Activated CD4-positive, alpha-beta T cell treated with anti-CD3 and anti-CD28 coated beads for 36 hours (primary cell): ENCODE measurements at regions of chr5 and their contacts with region 1.

Region 1: GRCh38 chr5:2751592-2752021 is at the start of gene IRX2:
- DNase-seq: no peak
- ATAC-seq: no peak
- H3K4me3 Mint-ChIP-seq: no peak within 1 kb of the TSS
- H3K27ac Mint-ChIP-seq: no peak within 1 kb of the TSS
- H3K4me1 Mint-ChIP-seq: peaks cover 20% of the 10 kb centered on the region
- H3K27me3 Mint-ChIP-seq: peaks cover 52% of the 10 kb centered on the region
- total RNA-seq, gene IRX2: not detected

Region 2: DNA sequence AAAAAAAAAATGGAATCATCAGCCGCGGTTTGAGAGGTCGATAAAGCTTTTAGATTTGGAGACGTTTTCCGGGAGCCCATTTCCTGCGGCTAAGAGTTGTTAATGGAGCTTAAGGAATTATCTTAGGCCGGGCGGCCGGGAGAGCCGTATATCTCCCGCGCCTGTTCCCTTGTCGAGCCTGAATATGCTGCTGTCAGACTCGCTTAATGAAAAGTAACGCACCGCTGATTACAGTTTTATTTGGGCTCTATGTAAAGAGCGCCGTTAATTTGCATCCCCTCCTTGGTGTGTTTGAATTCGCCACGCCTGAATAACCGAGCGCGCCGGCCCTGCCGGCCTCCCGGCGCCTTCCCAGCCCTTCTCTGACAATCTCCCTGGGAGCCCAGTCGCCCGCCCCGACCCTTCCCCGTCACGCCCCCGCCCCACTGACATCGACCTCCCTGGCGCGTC is 876.8 kb before region 1 on chr5:
- CTCF ChIA-PET with region 1: no interaction called
- POLR2A ChIA-PET with region 1: no interaction called
- intact Hi-C with region 1: loop called (anchors 2 to 5 kb)
- DNase-seq: no peak
- ATAC-seq: no peak
- H3K4me3 Mint-ChIP-seq: no peak overlapping the region
- H3K27ac Mint-ChIP-seq: no peak overlapping the region
- H3K4me1 Mint-ChIP-seq: peaks cover 8% of the 10 kb centered on the region
- H3K27me3 Mint-ChIP-seq: peaks cover 35% of the 10 kb centered on the region

Region 3: DNA sequence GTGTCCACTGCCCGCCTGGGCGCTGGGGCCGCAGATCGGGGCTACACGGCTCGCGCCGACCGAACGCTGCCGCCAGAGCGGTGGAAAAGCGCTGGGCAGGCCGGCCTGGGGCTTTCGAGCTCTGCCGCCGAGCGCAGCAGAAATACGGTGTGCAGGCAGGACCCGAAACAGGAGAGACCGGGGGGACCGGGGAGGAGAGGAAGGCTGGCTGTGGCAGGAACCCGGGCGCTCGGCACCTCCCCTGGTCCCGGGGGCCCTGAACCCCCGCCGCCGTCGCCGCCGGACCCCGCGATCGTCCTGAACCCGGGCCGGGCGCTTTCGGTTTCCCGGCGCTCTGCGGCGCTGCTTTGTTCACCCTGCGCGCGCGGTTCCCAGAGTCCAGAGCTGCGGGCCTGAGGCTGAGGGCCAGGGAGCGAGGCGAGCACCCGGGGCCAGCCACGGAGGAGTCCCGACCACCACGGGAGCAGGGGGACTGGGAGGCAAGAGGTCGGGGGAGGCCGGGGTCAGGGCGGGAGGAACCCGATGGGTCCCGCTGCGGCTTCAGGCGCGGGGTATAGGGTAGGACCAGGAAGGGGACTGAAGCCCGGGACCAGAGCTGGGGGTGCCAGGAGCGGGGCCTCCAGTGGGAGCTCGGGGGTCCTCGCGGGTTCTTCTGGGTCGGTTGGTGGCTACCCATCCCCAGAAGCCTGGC is 12.1 kb before region 1 on chr5:
- CTCF ChIA-PET with region 1: no interaction called
- POLR2A ChIA-PET with region 1: no interaction called
- intact Hi-C with region 1: loop called (anchors 2 kb)
- DNase-seq: no peak
- ATAC-seq: no peak
- H3K4me3 Mint-ChIP-seq: no peak overlapping the region
- H3K27ac Mint-ChIP-seq: no peak overlapping the region
- H3K4me1 Mint-ChIP-seq: no peaks in the 10 kb centered on the region
- H3K27me3 Mint-ChIP-seq: peaks cover 53% of the 10 kb centered on the region

Region 4: GRCh38 chr5:3118340-3118739 is 366.7 kb after region 1 on chr5:
- CTCF ChIA-PET with region 1: no interaction called
- POLR2A ChIA-PET with region 1: no interaction called
- intact Hi-C with region 1: loop called in 1 of 2 experiments (anchors 10 kb)
- DNase-seq: no peak
- ATAC-seq: no peak
- H3K4me3 Mint-ChIP-seq: no peak overlapping the region
- H3K27ac Mint-ChIP-seq: no peak overlapping the region
- H3K4me1 Mint-ChIP-seq: peaks cover 1% of the 10 kb centered on the region
- H3K27me3 Mint-ChIP-seq: peaks cover 61% of the 10 kb centered on the region

Region 5: GRCh38 chr5:3595006-3595961 is 843.7 kb after region 1 on chr5 and contains the start of gene IRX1:
- CTCF ChIA-PET with region 1: no interaction called
- POLR2A ChIA-PET with region 1: no interaction called
- intact Hi-C with region 1: loop called (anchors 2 to 5 kb)
- DNase-seq: no peak
- ATAC-seq: no peak
- H3K4me3 Mint-ChIP-seq: no peak within 1 kb of the TSS
- H3K27ac Mint-ChIP-seq: no peak within 1 kb of the TSS
- H3K4me1 Mint-ChIP-seq: peaks cover 10% of the 10 kb centered on the region
- H3K27me3 Mint-ChIP-seq: peaks cover 61% of the 10 kb centered on the region
- total RNA-seq, gene IRX1: not detected

Region 6: DNA sequence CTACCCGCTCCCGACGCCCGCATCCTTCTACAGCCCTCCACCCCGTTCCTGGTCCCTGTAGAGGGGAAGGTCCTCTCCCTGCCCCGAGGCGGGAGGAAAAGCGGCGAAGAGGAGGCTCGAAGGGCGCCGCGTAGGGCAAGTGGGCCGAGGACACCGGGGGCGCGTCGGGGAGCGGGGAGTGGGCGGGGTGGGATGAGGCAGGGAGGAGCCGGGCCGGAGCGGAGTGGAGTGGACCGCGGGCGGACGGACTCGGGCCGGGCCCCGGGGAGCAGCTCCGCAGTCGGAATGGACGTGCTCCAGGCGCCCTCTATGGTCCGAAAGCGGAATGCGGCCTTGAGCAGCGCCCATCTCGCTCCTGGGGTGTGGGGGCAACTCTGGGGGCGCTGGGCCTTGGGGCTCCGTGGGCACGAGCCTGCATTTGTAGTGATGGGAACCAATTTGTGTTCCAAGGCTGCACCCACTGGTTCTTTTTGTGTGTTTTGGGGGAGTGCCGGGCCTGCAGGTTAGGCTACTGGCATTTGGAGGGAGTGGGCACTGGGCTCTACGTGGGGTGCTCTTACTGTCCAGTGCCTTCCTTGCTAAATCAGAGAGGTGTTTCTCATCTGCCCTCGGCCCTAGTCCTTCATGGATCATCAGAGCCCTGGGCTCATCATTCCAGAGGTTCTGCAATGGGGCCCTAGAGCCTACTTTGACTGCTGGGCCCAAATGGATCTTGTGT is 851.3 kb after region 1 on chr5:
- CTCF ChIA-PET with region 1: no interaction called
- POLR2A ChIA-PET with region 1: no interaction called
- intact Hi-C with region 1: loop called (anchors 2 to 5 kb)
- DNase-seq: peak; percentile 52
- ATAC-seq: no peak
- H3K4me3 Mint-ChIP-seq: no peak overlapping the region
- H3K27ac Mint-ChIP-seq: no peak overlapping the region
- H3K4me1 Mint-ChIP-seq: peaks cover 8% of the 10 kb centered on the region
- H3K27me3 Mint-ChIP-seq: peaks cover 61% of the 10 kb centered on the region